T-cell (primary cell): ENCODE measurements at regions of chr17 and their contacts with region 1.

Region 1: GRCh38 chr17:67239597-67239996 is 5.4 kb downstream of the HELZ start:
- DNase-seq: no peak
- ATAC-seq: no peak
- H3K4me3 ChIP-seq: no peak overlapping the region
- H3K4me3 Mint-ChIP-seq: no peak overlapping the region
- H3K27ac ChIP-seq: no peak overlapping the region
- H3K27ac Mint-ChIP-seq: no peak overlapping the region
- H3K4me1 ChIP-seq: peaks cover 12 to 22% of the 10 kb centered on the region in 2 experiments
- H3K4me1 Mint-ChIP-seq: peaks cover 64 to 68% (median 66%) of the 10 kb centered on the region in 3 donors
- H3K27me3 ChIP-seq: no peaks in the 10 kb centered on the region
- H3K27me3 Mint-ChIP-seq: no peaks in the 10 kb centered on the region

Region 2: GRCh38 chr17:67200720-67201301 is 38.8 kb before region 1 on chr17:
- CTCF ChIA-PET with region 1: no interaction called
- POLR2A ChIA-PET with region 1: no interaction called
- DNase-seq: no peak
- ATAC-seq: no peak
- H3K4me3 ChIP-seq: no peak overlapping the region
- H3K4me3 Mint-ChIP-seq: no peak overlapping the region
- H3K27ac ChIP-seq: no peak overlapping the region
- H3K27ac Mint-ChIP-seq: no peak overlapping the region
- H3K4me1 ChIP-seq: no peaks in the 10 kb centered on the region
- H3K4me1 Mint-ChIP-seq: peaks cover 15 to 27% (median 22%) of the 10 kb centered on the region in 3 donors
- H3K27me3 ChIP-seq: no peaks in the 10 kb centered on the region
- H3K27me3 Mint-ChIP-seq: no peaks in the 10 kb centered on the region

Region 3: GRCh38 chr17:67221062-67221998 is 18.3 kb before region 1 on chr17:
- CTCF ChIA-PET with region 1: interaction called, 7 to 12 read pairs
- POLR2A ChIA-PET with region 1: interaction called in 1 of 2 experiments, 6 read pairs
- DNase-seq: peak in 21 of 35 experiments; percentile 9 to 74 (median 34)
- ATAC-seq: peak in 2 of 4 experiments; percentile 45 to 82
- H3K4me3 ChIP-seq: no peak overlapping the region
- H3K4me3 Mint-ChIP-seq: no peak overlapping the region
- H3K27ac ChIP-seq: no peak overlapping the region
- H3K27ac Mint-ChIP-seq: peak overlapping the region in 1 of 2 donors; percentile 11
- H3K4me1 ChIP-seq: peaks cover 0 to 21% of the 10 kb centered on the region in 2 experiments
- H3K4me1 Mint-ChIP-seq: peaks cover 49 to 64% (median 55%) of the 10 kb centered on the region in 3 donors
- H3K27me3 ChIP-seq: no peaks in the 10 kb centered on the region
- H3K27me3 Mint-ChIP-seq: no peaks in the 10 kb centered on the region

Region 4: DNA sequence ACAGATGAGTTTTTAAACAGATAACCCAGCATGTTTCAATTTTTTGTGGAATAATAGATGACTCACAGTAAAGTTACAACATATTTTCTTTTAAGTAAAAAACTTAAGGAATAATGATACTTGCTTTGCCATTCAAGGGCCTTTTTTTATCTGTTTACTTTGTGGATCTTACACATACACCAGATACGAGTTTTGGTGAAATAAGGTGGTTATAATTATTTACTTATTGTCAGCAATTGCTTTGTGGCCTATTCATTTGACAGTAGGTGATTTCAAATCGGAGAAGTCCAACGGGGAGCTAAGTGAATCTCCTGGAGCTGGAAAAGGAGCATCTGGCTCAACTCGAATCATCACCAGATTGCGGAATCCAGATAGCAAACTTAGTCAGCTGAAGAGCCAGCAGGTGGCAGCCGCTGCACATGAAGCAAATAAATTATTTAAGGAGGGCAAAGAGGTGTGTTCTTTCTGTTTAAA is 652.0 kb after region 1 on chr17:
- CTCF ChIA-PET with region 1: no interaction called
- POLR2A ChIA-PET with region 1: interaction called in 1 of 2 experiments, 12 read pairs
- DNase-seq: no peak
- ATAC-seq: no peak
- H3K4me3 ChIP-seq: no peak overlapping the region
- H3K4me3 Mint-ChIP-seq: no peak overlapping the region
- H3K27ac ChIP-seq: no peak overlapping the region
- H3K27ac Mint-ChIP-seq: no peak overlapping the region
- H3K4me1 ChIP-seq: no peaks in the 10 kb centered on the region
- H3K4me1 Mint-ChIP-seq: peaks cover 0 to 4% (median 2%) of the 10 kb centered on the region in 3 donors
- H3K27me3 ChIP-seq: no peaks in the 10 kb centered on the region
- H3K27me3 Mint-ChIP-seq: no peaks in the 10 kb centered on the region